Activated B cell treated with CpG ODN at 0.5 μM for 24 hours (primary cell): ENCODE measurements at regions of chr11 and their contacts with region 1.

Region 1: GRCh38 chr11:86160546-86161149 is 83.9 kb upstream of the EED start:
- DNase-seq: no peak
- ATAC-seq: no peak
- H3K4me3 Mint-ChIP-seq: no peak overlapping the region
- H3K27ac Mint-ChIP-seq: no peak overlapping the region
- H3K4me1 Mint-ChIP-seq: peaks cover 28% of the 10 kb centered on the region
- H3K27me3 Mint-ChIP-seq: no peaks in the 10 kb centered on the region
- CTCF ChIP-seq: no peak

Region 2: DNA sequence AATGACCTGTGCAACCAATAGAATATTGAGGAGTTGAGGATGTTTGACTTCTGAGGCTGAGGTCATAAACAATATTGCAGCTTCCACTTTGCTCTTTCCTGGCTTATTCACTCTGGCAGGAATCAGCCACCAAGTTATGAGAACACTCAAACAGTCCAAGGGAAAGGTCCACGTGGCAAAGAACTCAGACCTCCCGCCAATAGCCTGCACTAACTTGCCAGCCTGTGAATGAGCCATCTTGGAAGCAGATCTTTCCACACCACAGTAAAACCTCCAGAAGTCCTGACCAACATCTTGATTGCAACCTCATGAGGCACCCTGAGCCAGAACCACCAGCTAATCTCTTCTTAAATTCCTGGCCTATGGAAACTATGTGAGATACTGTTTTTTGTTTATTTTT is 69.1 kb before region 1 on chr11:
- CTCF ChIA-PET with region 1: no interaction called
- POLR2A ChIA-PET with region 1: no interaction called
- intact Hi-C with region 1: no loop called
- DNase-seq: no peak
- ATAC-seq: no peak
- H3K4me3 Mint-ChIP-seq: no peak overlapping the region
- H3K27ac Mint-ChIP-seq: no peak overlapping the region
- H3K4me1 Mint-ChIP-seq: no peaks in the 10 kb centered on the region
- H3K27me3 Mint-ChIP-seq: no peaks in the 10 kb centered on the region
- CTCF ChIP-seq: no peak

Region 3: DNA sequence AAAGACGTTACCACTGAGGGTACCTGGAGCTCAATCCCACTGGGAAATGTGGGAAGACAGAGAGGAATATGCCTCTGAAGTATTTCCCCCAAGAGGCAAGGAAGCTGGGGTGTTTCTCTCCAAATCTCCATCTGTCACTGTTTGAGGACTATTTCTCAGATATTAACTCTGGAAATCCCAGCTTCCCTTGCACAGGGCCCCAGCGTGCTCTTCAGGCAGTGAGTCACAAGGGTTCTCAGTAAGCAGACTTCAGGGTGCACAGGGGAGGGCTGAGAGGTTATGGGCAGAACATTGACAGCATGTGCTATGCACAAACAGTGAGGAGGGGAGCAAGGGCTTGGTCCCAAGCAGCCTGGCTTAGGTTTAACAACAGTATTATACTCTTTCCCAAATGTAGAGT is 23.0 kb after region 1 on chr11:
- CTCF ChIA-PET with region 1: no interaction called
- POLR2A ChIA-PET with region 1: interaction called, 3 read pairs
- intact Hi-C with region 1: loop called (anchors 2 kb)
- DNase-seq: no peak
- ATAC-seq: no peak
- H3K4me3 Mint-ChIP-seq: no peak overlapping the region
- H3K27ac Mint-ChIP-seq: no peak overlapping the region
- H3K4me1 Mint-ChIP-seq: no peaks in the 10 kb centered on the region
- H3K27me3 Mint-ChIP-seq: no peaks in the 10 kb centered on the region
- CTCF ChIP-seq: no peak

Region 4: GRCh38 chr11:86193297-86194095 is 32.8 kb after region 1 on chr11:
- CTCF ChIA-PET with region 1: interaction called, 9 read pairs
- POLR2A ChIA-PET with region 1: interaction called, 9 read pairs
- intact Hi-C with region 1: loop called (anchors 2 kb)
- DNase-seq: peak; percentile 48
- ATAC-seq: peak; percentile 96
- H3K4me3 Mint-ChIP-seq: peak overlapping the region; percentile 76
- H3K27ac Mint-ChIP-seq: peak overlapping the region; percentile 92
- H3K4me1 Mint-ChIP-seq: peaks cover 30% of the 10 kb centered on the region
- H3K27me3 Mint-ChIP-seq: no peaks in the 10 kb centered on the region
- CTCF ChIP-seq: peak; percentile 50